Activated CD8-positive, alpha-beta T cell treated with anti-CD3 and anti-CD28 coated beads for 36 hours (primary cell): ENCODE measurements at regions of chrX and their contacts with region 1.

Region 1: GRCh38 chrX:100674705-100675104 is 30.7 kb downstream of the SRPX2 start:
- DNase-seq: no peak
- ATAC-seq: no peak
- H3K4me3 Mint-ChIP-seq: no peak overlapping the region
- H3K27ac Mint-ChIP-seq: no peak overlapping the region
- H3K4me1 Mint-ChIP-seq: peaks cover 4% of the 10 kb centered on the region
- H3K27me3 Mint-ChIP-seq: no peaks in the 10 kb centered on the region
- CTCF ChIP-seq: no peak

Region 2: GRCh38 chrX:100685284-100685996 is 10.7 kb after region 1 on chrX:
- CTCF ChIA-PET with region 1: interaction called, 44 read pairs
- POLR2A ChIA-PET with region 1: no interaction called
- intact Hi-C with region 1: no loop called
- DNase-seq: peak; percentile 78
- ATAC-seq: peak; percentile 75
- H3K4me3 Mint-ChIP-seq: no peak overlapping the region
- H3K27ac Mint-ChIP-seq: no peak overlapping the region
- H3K4me1 Mint-ChIP-seq: peaks cover 17% of the 10 kb centered on the region
- H3K27me3 Mint-ChIP-seq: peaks cover 2% of the 10 kb centered on the region
- CTCF ChIP-seq: peak; percentile 70